ENCODE measurements at regions of chr4 and their contacts with region 1.

Region 1: GRCh38 chr4:42282081-42282901 is 115.0 kb upstream of the SHISA3 start:
- DNase-seq: peak; percentile 82
- H3K4me3 ChIP-seq: no peak overlapping the region
- H3K27ac ChIP-seq: no peak overlapping the region
- H3K4me1 ChIP-seq: no peaks in the 10 kb centered on the region
- CTCF ChIP-seq: peak; percentile 93

Region 2: GRCh38 chr4:41957634-41958033 is 324.7 kb before region 1 on chr4:
- CTCF ChIA-PET with region 1: no interaction called
- POLR2A ChIA-PET with region 1: interaction called, 3 read pairs
- intact Hi-C with region 1: loop called (anchors 5 kb)
- DNase-seq: peak; percentile 63
- H3K4me3 ChIP-seq: no peak overlapping the region
- H3K27ac ChIP-seq: no peak overlapping the region
- H3K4me1 ChIP-seq: no peaks in the 10 kb centered on the region
- CTCF ChIP-seq: peak; percentile 81

Region 3: DNA sequence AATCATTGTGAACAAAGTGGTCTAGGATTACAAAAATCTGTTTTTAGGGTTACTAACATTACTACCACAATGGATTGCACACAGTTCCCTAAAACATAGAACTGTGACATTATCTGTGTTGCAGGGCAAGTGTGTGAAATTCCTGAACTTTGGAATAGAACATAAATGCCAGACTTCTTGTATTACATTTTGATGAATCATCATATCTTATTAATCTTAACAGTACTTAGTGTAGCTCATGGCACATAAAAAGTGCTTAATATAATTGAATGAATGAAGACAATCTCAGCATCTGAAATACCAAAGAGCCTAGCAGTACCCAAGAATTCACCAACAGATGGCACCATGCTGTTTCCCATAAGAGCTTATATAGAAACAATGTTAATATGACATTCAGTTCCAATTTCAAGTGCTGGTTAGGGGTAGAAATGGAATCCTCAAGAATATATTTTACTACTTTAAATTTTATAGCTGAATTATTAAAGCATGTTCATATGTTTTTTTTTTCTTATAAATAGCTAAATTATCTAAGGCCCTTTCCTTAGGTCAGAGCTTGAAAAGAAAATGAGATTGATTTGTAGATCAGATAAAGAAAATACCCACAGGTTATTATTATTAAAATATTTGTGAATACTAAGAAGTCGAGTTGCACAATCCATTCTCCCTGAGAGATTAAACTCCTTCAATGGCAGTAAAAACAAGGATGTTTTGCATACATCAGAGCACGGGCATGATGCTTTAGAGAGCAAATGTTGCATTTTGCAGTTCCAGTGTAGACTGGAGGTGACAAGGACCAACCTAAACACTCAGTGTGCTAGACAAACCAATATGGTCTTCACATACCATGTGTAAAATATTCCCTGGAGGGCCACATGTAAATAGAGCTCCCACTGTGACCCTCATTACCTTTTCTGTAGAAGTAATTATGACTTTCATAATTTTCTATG is 89.3 kb after region 1 on chr4:
- CTCF ChIA-PET with region 1: no interaction called
- POLR2A ChIA-PET with region 1: no interaction called
- intact Hi-C with region 1: loop called (anchors 5 kb)
- DNase-seq: peak; percentile 63
- H3K4me3 ChIP-seq: no peak overlapping the region
- H3K27ac ChIP-seq: no peak overlapping the region
- H3K4me1 ChIP-seq: no peaks in the 10 kb centered on the region
- CTCF ChIP-seq: peak; percentile 87

Region 4: GRCh38 chr4:42396752-42397634 is 114.7 kb after region 1 on chr4 and contains the start of gene SHISA3:
- CTCF ChIA-PET with region 1: no interaction called
- POLR2A ChIA-PET with region 1: no interaction called
- intact Hi-C with region 1: loop called (anchors 5 kb)
- DNase-seq: peak; percentile 29
- H3K4me3 ChIP-seq: peak within 1 kb of the TSS; percentile 54
- H3K27ac ChIP-seq: no peak within 1 kb of the TSS
- H3K4me1 ChIP-seq: no peaks in the 10 kb centered on the region
- CTCF ChIP-seq: no peak
- total RNA-seq, gene SHISA3: not detected in 2 replicates

Region 5: GRCh38 chr4:42519803-42520417 is 237.6 kb after region 1 on chr4:
- CTCF ChIA-PET with region 1: no interaction called
- POLR2A ChIA-PET with region 1: no interaction called
- intact Hi-C with region 1: loop called (anchors 1 kb)
- DNase-seq: peak; percentile 68
- H3K4me3 ChIP-seq: no peak overlapping the region
- H3K27ac ChIP-seq: no peak overlapping the region
- H3K4me1 ChIP-seq: peaks cover 8% of the 10 kb centered on the region
- CTCF ChIP-seq: peak; percentile 88

Region 6: GRCh38 chr4:42865572-42866189 is 583.4 kb after region 1 on chr4:
- CTCF ChIA-PET with region 1: no interaction called
- POLR2A ChIA-PET with region 1: no interaction called
- intact Hi-C with region 1: loop called (anchors 1 kb)
- DNase-seq: peak; percentile 62
- H3K4me3 ChIP-seq: no peak overlapping the region
- H3K27ac ChIP-seq: no peak overlapping the region
- H3K4me1 ChIP-seq: no peaks in the 10 kb centered on the region
- CTCF ChIP-seq: peak; percentile 94

Measured in OCI-LY7 (cell line).